ENCODE measurements at regions of chr2 and their contacts with region 1.

Region 1: GRCh38 chr2:219149667-219150066 is 10.9 kb downstream of the NHEJ1 start:
- DNase-seq: no peak
- ATAC-seq: no peak
- H3K4me3 ChIP-seq: no peak overlapping the region
- H3K27ac ChIP-seq: no peak overlapping the region
- H3K4me1 ChIP-seq: no peaks in the 10 kb centered on the region
- H3K27me3 ChIP-seq: no peaks in the 10 kb centered on the region
- CTCF ChIP-seq: no peak
- POLR2A ChIP-seq: no peak

Region 2: DNA sequence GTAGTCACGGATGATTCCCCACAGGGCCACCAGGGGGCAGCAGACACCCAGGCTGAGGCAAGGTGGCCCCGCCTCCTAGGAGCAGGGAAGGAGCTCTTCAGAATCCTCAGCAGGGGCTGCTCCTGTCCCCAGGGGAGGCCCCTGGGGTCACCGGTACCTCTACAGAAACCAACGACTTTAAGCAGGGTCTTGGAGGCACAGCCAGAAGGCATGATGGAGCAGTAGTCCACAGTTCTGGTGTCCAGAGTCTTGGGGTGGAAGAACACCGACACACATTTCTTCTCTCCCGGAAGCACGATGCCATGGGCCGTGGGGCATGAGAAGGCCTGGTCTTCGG is 119.9 kb before region 1 on chr2:
- in situ Hi-C with region 1: loop called in 2 of 4 experiments (anchors 5 to 10 kb)
- intact Hi-C with region 1: no loop called
- DNase-seq: peak; percentile 36 to 65
- ATAC-seq: peak; percentile 83 to 87
- H3K4me3 ChIP-seq: no peak overlapping the region
- H3K27ac ChIP-seq: no peak overlapping the region
- H3K4me1 ChIP-seq: no peaks in the 10 kb centered on the region
- H3K27me3 ChIP-seq: peaks cover 0 to 12% (median 9%) of the 10 kb centered on the region in 3 donors
- CTCF ChIP-seq: peak; percentile 64 to 97 (median 90)
- POLR2A ChIP-seq: no peak